GM12878 (cell line): ENCODE measurements at regions of chr19 and their contacts with region 1.

Region 1: GRCh38 chr19:49391581-49392399 is 3.7 kb downstream of the KASH5 start:
- DNase-seq: peak; percentile 40
- ATAC-seq: peak; percentile 96
- H3K4me3 ChIP-seq: no peak overlapping the region
- H3K27ac ChIP-seq: no peak overlapping the region
- H3K4me1 ChIP-seq: no peaks in the 10 kb centered on the region; the same call in 1 of the 2 replicates
- H3K27me3 ChIP-seq: no peaks in the 10 kb centered on the region
- CTCF ChIP-seq: peak; percentile 84 to 97 (median 90); a peak in 5 of 6 replicates
- EP300 ChIP-seq: no peak
- POLR2A ChIP-seq: no peak
- RAD21 ChIP-seq: peak; percentile 97

Region 2: DNA sequence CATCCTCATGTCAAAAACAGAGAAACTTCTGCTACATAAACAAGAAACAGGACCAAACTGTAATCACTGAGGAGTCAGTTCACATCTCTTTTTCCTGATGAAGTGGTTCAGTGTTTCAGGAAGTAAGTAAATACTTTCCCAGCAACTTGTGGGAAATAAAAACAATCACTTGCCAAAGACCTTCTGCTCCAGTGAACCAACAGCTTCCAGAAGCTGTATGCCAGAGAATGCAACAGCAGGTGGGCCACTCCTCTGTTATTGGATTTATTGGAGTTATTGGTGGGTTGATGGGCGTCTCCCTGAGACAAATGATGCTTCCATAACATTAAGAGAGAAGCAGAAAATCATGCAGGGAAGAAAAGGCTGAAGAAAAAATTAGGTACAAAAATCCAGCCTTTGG is 76.7 kb before region 1 on chr19:
- CTCF ChIA-PET with region 1: interaction called, 12 read pairs
- POLR2A ChIA-PET with region 1: no interaction called
- RAD21 ChIA-PET with region 1: no interaction called
- SMC1A ChIA-PET with region 1: interaction called, 3 read pairs
- in situ Hi-C with region 1: no loop called
- intact Hi-C with region 1: no loop called
- DNase-seq: no peak
- ATAC-seq: no peak
- H3K4me3 ChIP-seq: no peak overlapping the region
- H3K27ac ChIP-seq: no peak overlapping the region
- H3K4me1 ChIP-seq: no peaks in the 10 kb centered on the region
- H3K27me3 ChIP-seq: no peaks in the 10 kb centered on the region
- CTCF ChIP-seq: no peak
- EP300 ChIP-seq: no peak
- POLR2A ChIP-seq: no peak
- RAD21 ChIP-seq: no peak

Region 3: DNA sequence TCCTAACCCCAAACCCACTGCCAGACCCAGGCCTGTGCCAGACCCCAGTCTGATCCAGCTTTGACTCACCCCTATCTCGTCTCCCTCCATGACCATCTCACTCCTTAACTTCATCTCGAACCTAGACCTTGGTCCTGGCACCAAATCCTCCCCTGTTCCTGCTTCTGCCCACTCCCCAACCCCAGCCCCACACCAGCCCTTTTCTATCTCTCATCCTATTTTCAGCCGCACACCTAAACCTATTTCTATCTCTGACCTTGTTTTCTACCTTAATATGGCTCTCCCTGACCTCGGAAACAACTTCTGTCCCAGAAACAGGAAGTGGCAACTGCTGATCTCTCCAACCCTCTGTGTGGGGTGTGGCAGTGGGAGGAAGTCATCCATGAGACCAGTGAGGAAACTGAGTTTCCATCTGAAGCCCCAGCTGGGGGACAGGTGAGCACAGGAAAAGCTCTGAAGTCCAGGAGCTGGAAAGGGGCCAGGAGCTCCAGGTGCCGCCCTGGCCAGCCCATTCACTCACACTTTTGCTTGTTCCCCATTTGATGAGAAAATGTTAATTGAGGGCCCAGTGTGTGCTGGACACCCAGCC is 17.7 kb after region 1 on chr19:
- CTCF ChIA-PET with region 1: interaction called, 19 read pairs
- POLR2A ChIA-PET with region 1: interaction called, 3 read pairs
- RAD21 ChIA-PET with region 1: interaction called, 4 read pairs
- SMC1A ChIA-PET with region 1: interaction called, 4 read pairs
- in situ Hi-C with region 1: no loop called
- intact Hi-C with region 1: no loop called
- DNase-seq: peak; percentile 30
- ATAC-seq: peak; percentile 83
- H3K4me3 ChIP-seq: no peak overlapping the region
- H3K27ac ChIP-seq: peak overlapping the region; percentile 62
- H3K4me1 ChIP-seq: peaks cover 17% of the 10 kb centered on the region
- H3K27me3 ChIP-seq: no peaks in the 10 kb centered on the region
- CTCF ChIP-seq: no peak
- EP300 ChIP-seq: 0 out of 4 replicates have a peak, but pooled peaks of 1 of the 2 experiments have one; percentile 21
- POLR2A ChIP-seq: no peak
- RAD21 ChIP-seq: no peak

Region 4: GRCh38 chr19:49430678-49431329 is 39.0 kb after region 1 on chr19:
- CTCF ChIA-PET with region 1: interaction called, 17 read pairs
- POLR2A ChIA-PET with region 1: interaction called, 4 read pairs
- RAD21 ChIA-PET with region 1: interaction called, 4 read pairs
- SMC1A ChIA-PET with region 1: interaction called, 6 read pairs
- in situ Hi-C with region 1: loop called (anchors 5 kb)
- intact Hi-C with region 1: loop called (anchors 1 kb)
- DNase-seq: no peak
- ATAC-seq: peak; percentile 66
- H3K4me3 ChIP-seq: no peak overlapping the region
- H3K27ac ChIP-seq: no peak overlapping the region
- H3K4me1 ChIP-seq: no peaks in the 10 kb centered on the region; the same call in 1 of the 2 replicates
- H3K27me3 ChIP-seq: peaks cover 8 to 18% of the 10 kb centered on the region in 2 experiments
- CTCF ChIP-seq: peak; percentile 36 to 45 (median 39); a peak in 5 of 6 replicates
- EP300 ChIP-seq: no peak
- POLR2A ChIP-seq: no peak
- RAD21 ChIP-seq: 0 out of 2 replicates have a peak, but pooled peaks have one; percentile 22

Region 5: GRCh38 chr19:49443366-49444099 is 51.7 kb after region 1 on chr19:
- CTCF ChIA-PET with region 1: interaction called, 47 read pairs
- POLR2A ChIA-PET with region 1: interaction called, 3 read pairs
- RAD21 ChIA-PET with region 1: interaction called, 15 read pairs
- SMC1A ChIA-PET with region 1: interaction called, 14 read pairs
- in situ Hi-C with region 1: loop called (anchors 5 kb)
- intact Hi-C with region 1: loop called (anchors 1 kb)
- DNase-seq: peak; percentile 80
- ATAC-seq: peak; percentile 92
- H3K4me3 ChIP-seq: peak overlapping the region; percentile 81
- H3K27ac ChIP-seq: peak overlapping the region; percentile 21; the same call in 1 of the 2 replicates
- H3K4me1 ChIP-seq: no peaks in the 10 kb centered on the region
- H3K27me3 ChIP-seq: peaks cover 9 to 20% of the 10 kb centered on the region in 2 experiments
- CTCF ChIP-seq: peak; percentile 70 to 92 (median 90)
- EP300 ChIP-seq: no peak
- POLR2A ChIP-seq: no peak
- RAD21 ChIP-seq: peak; percentile 78

Region 6: DNA sequence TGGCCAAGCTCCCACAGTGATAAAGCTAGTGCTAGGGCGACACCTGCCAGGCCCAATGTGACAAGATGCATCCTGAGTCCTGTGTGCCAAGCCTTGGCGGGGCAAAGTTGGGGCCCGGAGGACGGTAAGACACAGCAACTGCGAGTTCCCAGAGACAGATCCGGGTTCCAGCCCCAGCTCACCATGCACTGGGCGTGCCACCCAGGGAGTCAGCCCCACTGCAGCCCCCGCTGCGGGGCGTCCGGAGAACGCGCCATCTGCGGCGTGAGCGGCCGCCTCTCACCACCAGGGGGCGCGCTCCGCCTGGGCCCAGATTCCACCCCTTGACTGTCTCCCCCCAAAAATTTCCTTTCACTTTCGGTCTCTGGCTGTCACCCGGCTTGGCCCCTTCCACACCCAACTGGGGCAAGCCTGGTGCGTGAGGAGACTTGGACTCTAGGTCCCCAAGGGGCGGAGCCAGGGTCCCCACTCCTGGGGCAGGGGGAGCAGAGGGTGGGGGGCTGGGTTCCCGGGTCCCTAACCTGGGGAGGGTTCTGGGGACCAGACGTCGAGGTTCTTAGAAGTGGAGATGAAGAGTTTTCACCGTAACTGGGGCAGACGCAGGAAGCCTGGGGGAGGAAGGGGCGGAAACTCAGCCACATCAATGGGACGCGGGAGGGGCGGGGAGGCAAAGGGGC is 82.2 kb after region 1 on chr19 and contains the start of gene FLT3LG:
- CTCF ChIA-PET with region 1: interaction called, 68 read pairs
- POLR2A ChIA-PET with region 1: interaction called, 3 read pairs
- RAD21 ChIA-PET with region 1: interaction called, 23 read pairs
- SMC1A ChIA-PET with region 1: interaction called, 15 read pairs
- in situ Hi-C with region 1: no loop called
- intact Hi-C with region 1: loop called (anchors 1 kb)
- DNase-seq: no peak
- ATAC-seq: peak; percentile 66
- H3K4me3 ChIP-seq: peak within 1 kb of the TSS; percentile 82
- H3K27ac ChIP-seq: peak within 1 kb of the TSS; percentile 66
- H3K4me1 ChIP-seq: peaks cover 32% of the 10 kb centered on the region
- H3K27me3 ChIP-seq: no peaks in the 10 kb centered on the region
- CTCF ChIP-seq: peak; percentile 91 to 97 (median 94)
- EP300 ChIP-seq: no peak
- POLR2A ChIP-seq: peak; percentile 69; the same call in 1 of the 2 replicates
- RAD21 ChIP-seq: peak; percentile 63
- polyA plus RNA-seq, gene FLT3LG: 0.68 to 1.6 TPM